ENCODE measurements at regions of chr1 and their contacts with region 1.

Region 1: GRCh38 chr1:33472349-33472980 is at the start of gene ZSCAN20:
- DNase-seq: peak; percentile 99
- H3K4me3 ChIP-seq: peak within 1 kb of the TSS; percentile 70
- H3K27ac ChIP-seq: peak within 1 kb of the TSS; percentile 76
- H3K4me1 ChIP-seq: peaks cover 12% of the 10 kb centered on the region
- H3K27me3 ChIP-seq: no peaks in the 10 kb centered on the region
- CTCF ChIP-seq: no peak
- total RNA-seq, gene ZSCAN20: 3.9 and 4.5 TPM in 2 replicates

Region 2: DNA sequence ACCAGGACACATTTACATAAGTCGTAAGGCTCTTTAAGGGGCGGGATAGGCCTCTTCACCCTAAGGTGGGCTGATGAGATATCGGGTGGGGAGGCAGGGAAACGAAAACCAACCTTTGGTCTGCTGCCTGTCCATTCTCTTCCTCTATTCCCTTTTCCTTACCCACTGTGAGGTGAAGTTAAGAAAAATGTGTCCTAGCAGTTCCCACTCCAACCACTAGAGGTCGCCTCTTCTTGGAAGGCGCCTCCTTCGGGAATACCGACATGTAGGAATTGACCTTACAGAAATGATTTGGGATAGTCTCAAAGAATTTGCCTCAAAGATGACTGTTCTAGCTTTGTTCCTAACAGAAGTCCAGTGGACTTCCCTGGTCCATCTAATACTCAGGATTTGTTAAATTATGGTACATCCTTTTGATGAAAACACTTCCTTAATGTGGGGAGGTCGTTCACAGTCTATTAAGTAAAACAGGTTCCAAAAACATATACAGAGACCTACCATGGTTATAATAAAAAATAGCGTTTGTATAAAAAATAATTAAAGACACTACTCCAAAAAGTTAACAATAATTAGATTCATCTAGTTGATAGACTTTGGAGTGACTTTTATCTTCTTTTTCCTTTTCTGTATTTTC is 377.4 kb before region 1 on chr1:
- CTCF ChIA-PET with region 1: no interaction called
- POLR2A ChIA-PET with region 1: no interaction called
- intact Hi-C with region 1: loop called (anchors 2 kb)
- DNase-seq: peak; percentile 74
- H3K4me3 ChIP-seq: no peak overlapping the region
- H3K27ac ChIP-seq: no peak overlapping the region
- H3K4me1 ChIP-seq: no peaks in the 10 kb centered on the region
- H3K27me3 ChIP-seq: no peaks in the 10 kb centered on the region
- CTCF ChIP-seq: peak; percentile 97

Region 3: DNA sequence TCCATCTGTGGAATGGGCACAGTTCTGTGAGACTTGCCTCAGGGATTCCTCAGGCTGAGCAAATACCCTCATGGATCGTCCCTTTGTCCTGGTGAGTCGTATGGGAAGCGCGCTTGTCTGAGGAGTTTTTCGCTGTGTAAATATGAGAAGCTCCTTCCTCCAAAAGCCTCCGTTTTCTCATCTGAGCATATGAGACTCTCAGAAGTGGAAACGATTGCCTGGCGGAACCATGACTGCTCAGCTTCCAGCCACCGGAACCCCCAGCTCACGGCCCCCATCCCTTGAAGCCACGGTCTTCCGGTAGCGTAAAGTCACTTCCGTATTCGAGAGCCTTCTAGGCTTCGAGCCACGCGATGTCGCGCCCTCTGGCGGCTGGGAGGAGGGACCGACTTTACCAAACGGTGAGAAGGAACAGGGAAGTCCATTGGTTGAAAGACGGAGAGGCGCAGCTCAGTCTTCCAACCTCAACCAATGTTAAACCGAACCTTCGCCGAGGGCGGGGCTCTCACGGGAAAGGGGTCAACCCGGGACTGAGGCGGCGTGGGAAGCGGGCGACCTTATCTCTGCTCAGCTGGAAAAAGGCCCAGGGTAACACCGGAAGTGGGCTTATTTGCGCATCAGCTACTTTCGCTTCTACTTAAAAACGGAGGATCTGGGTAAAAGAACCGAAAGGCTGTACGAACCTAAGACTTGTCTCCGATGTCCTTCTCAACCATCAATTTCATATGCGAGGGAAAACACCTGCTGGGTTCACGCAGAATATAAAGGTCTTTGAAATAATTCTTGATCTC is 345.3 kb before region 1 on chr1:
- CTCF ChIA-PET with region 1: interaction called, 5 read pairs
- POLR2A ChIA-PET with region 1: no interaction called
- intact Hi-C with region 1: loop called (anchors 2 kb)
- DNase-seq: peak; percentile 100
- H3K4me3 ChIP-seq: peak overlapping the region; percentile 73
- H3K27ac ChIP-seq: peak overlapping the region; percentile 86
- H3K4me1 ChIP-seq: peaks cover 29% of the 10 kb centered on the region
- H3K27me3 ChIP-seq: no peaks in the 10 kb centered on the region
- CTCF ChIP-seq: peak; percentile 99

Region 4: GRCh38 chr1:33367485-33368405 is 104.7 kb before region 1 on chr1:
- CTCF ChIA-PET with region 1: interaction called, 7 read pairs
- POLR2A ChIA-PET with region 1: no interaction called
- intact Hi-C with region 1: loop called (anchors 5 kb)
- DNase-seq: peak; percentile 87
- H3K4me3 ChIP-seq: no peak overlapping the region
- H3K27ac ChIP-seq: no peak overlapping the region
- H3K4me1 ChIP-seq: peaks cover 32% of the 10 kb centered on the region
- H3K27me3 ChIP-seq: no peaks in the 10 kb centered on the region
- CTCF ChIP-seq: peak; percentile 96

Region 5: DNA sequence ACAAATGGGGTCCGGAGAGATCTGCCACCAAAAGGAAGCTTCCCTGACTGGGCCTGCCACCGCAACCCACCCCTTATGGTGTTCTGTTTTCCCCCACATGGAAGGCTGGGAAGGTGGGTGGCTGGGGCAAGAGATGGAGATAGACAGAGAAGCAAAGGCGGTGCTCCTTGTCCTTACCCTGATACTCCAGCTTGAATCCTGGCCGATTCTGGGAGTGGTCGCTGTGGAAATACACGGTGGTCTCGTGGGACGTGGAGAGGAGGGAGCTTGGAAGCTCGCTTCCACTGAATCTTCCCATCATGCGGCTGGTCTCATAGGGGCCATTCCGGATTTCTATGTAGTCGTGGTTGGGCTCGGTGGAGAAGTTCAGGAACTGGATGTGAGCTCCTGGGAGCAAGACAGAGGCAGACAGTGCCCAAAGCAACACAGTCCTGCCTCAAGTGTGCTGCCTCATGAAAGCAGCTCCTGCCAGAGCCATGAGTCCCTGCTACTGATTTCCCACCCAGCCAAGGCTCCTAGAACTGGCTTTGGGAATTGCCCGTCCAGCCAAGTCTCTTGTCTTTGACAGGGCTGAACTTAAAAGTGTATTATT is 138.5 kb after region 1 on chr1:
- CTCF ChIA-PET with region 1: no interaction called
- POLR2A ChIA-PET with region 1: no interaction called
- intact Hi-C with region 1: loop called (anchors 5 kb)
- DNase-seq: no peak
- H3K4me3 ChIP-seq: no peak overlapping the region
- H3K27ac ChIP-seq: no peak overlapping the region
- H3K4me1 ChIP-seq: peaks cover 2% of the 10 kb centered on the region
- H3K27me3 ChIP-seq: no peaks in the 10 kb centered on the region
- CTCF ChIP-seq: no peak